Naive thymus-derived CD4-positive, alpha-beta T cell (primary cell): ENCODE measurements at regions of chr6 and their contacts with region 1.

Region 1: GRCh38 chr6:33248925-33249731 is 22.5 kb downstream of the VPS52 start:
- DNase-seq: peak; percentile 79 to 97 (median 94)
- ATAC-seq: peak; percentile 91
- H3K4me3 ChIP-seq: peak overlapping the region; percentile 81
- H3K4me3 Mint-ChIP-seq: peak overlapping the region; percentile 81 to 94 (median 90)
- H3K27ac ChIP-seq: peak overlapping the region; percentile 96
- H3K27ac Mint-ChIP-seq: peak overlapping the region; percentile 82 to 98 (median 94)
- H3K4me1 ChIP-seq: peaks cover 11 to 15% of the 10 kb centered on the region in 2 donors
- H3K4me1 Mint-ChIP-seq: peaks cover 26 to 43% (median 35%) of the 10 kb centered on the region in 7 donors
- H3K27me3 ChIP-seq: no peaks in the 10 kb centered on the region
- H3K27me3 Mint-ChIP-seq: peaks cover 0 to 4% (median 0%) of the 10 kb centered on the region in 5 donors

Region 2: GRCh38 chr6:32058511-32058963 is 1190.6 kb before region 1 on chr6:
- CTCF ChIA-PET with region 1: no interaction called
- POLR2A ChIA-PET with region 1: no interaction called
- intact Hi-C with region 1: no loop called
- DNase-seq: no peak
- ATAC-seq: no peak
- H3K4me3 ChIP-seq: no peak overlapping the region
- H3K4me3 Mint-ChIP-seq: no peak overlapping the region
- H3K27ac ChIP-seq: no peak overlapping the region
- H3K27ac Mint-ChIP-seq: no peak overlapping the region
- H3K4me1 ChIP-seq: no peaks in the 10 kb centered on the region
- H3K4me1 Mint-ChIP-seq: no peaks in the 10 kb centered on the region
- H3K27me3 ChIP-seq: no peaks in the 10 kb centered on the region
- H3K27me3 Mint-ChIP-seq: peaks cover 0 to 4% (median 0%) of the 10 kb centered on the region in 5 donors

Region 3: DNA sequence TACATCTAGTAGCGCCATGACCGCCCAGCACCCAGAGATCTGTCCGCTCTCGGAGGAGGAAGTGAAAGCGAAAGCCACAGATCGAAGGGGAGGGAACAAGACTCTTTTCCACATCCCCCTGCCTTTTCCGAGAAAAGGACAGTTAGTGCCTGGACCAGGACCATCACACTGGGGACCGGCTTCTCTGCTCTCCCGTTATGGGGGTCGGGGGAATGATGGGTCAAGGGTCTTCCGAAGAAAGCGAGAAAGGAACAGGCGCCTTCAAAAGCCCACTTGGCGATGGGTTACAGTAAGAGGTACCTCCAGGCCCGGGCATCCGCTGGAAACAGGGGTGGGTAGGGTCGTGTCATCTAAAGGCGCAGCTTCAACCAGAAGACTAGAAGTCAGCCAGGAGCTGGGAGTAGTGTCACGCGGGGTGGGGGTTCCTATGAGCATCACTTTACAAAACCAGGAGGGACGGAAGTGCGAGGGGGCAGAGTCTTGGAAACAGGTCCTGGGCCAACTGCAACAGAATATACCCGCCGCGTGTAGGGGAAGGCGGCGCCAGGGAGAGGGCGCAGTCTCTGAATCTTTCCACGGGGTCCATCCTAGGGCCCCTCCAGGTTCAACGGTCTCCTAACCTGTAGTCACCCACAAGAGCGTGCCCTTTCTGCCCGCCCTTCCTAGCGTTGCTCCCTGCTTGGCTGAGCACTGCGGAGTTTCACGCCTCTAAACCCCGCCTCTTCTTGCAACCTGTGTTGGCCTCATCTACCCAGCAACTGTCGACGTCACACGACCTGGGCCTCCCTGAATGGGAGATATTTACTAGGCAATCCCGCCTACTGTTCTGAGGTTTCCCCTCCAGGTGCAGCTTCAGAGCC is 404.9 kb before region 1 on chr6 and contains the start of gene PSMB8:
- CTCF ChIA-PET with region 1: no interaction called
- POLR2A ChIA-PET with region 1: no interaction called
- intact Hi-C with region 1: loop called (anchors 2 kb)
- DNase-seq: peak; percentile 92 to 99 (median 97)
- ATAC-seq: peak; percentile 90
- H3K4me3 ChIP-seq: peak within 1 kb of the TSS; percentile 97
- H3K4me3 Mint-ChIP-seq: peak within 1 kb of the TSS; percentile 92 to 99 (median 98)
- H3K27ac ChIP-seq: peak within 1 kb of the TSS; percentile 97
- H3K27ac Mint-ChIP-seq: peak within 1 kb of the TSS; percentile 99 to 100 (median 100)
- H3K4me1 ChIP-seq: peaks cover 71 to 72% of the 10 kb centered on the region in 2 donors
- H3K4me1 Mint-ChIP-seq: peaks cover 66 to 83% (median 79%) of the 10 kb centered on the region in 7 donors
- H3K27me3 ChIP-seq: no peaks in the 10 kb centered on the region
- H3K27me3 Mint-ChIP-seq: no peaks in the 10 kb centered on the region
- total RNA-seq, gene PSMB8: 111 to 419 (median 115) TPM

Region 4: DNA sequence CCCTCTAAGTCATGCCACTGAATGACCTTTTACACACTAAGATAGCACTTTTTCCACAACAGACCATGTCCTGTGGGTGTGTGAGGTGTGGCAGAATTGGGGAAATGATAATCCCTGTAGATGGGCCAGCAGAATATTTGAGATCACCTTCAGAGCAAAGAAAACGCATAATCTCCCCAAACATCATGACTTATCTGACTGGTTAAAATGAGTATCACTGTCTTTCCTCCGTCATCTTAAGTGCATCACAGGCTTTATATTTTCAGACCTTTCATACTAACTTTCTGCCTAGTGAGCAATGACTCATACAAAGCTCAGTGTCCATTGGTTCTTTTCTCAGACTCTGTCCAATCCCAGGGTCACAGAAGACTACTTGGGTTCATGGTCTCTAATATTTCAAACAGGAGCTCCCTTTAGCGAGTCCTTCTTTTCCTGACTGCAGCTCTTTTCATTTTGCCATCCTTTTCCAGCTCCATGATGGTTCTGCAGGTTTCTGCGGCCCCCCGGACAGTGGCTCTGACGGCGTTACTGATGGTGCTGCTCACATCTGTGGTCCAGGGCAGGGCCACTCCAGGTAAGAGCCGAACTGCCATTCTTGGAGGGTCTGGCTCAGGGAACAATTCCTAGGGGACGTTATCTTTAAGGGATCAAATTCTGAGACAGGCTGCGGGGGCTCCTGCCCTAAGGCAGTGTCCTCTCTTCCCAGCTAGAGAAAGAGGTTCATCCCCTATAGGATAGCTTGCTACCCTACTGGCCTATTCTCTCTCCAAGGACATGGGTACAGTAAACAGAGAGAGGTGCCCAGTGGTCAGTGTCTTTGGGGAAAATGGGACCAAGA is 173.3 kb before region 1 on chr6 and contains the start of gene HLA-DPB1:
- CTCF ChIA-PET with region 1: no interaction called
- POLR2A ChIA-PET with region 1: interaction called, 3 read pairs
- intact Hi-C with region 1: loop called in 1 of 2 experiments (anchors 5 kb)
- DNase-seq: peak in 7 of 9 donors; percentile 53 to 83 (median 67)
- ATAC-seq: peak; percentile 94
- H3K4me3 ChIP-seq: peak within 1 kb of the TSS; percentile 74
- H3K4me3 Mint-ChIP-seq: peak within 1 kb of the TSS; percentile 60 to 91 (median 84)
- H3K27ac ChIP-seq: peak within 1 kb of the TSS; percentile 76
- H3K27ac Mint-ChIP-seq: peak within 1 kb of the TSS; percentile 32 to 93 (median 76)
- H3K4me1 ChIP-seq: peaks cover 5 to 44% of the 10 kb centered on the region in 2 donors
- H3K4me1 Mint-ChIP-seq: peaks cover 34 to 71% (median 54%) of the 10 kb centered on the region in 7 donors
- H3K27me3 ChIP-seq: no peaks in the 10 kb centered on the region
- H3K27me3 Mint-ChIP-seq: peaks cover 0 to 11% (median 2%) of the 10 kb centered on the region in 5 donors
- total RNA-seq, gene HLA-DPB1: 13.7 to 308 (median 43.3) TPM

Region 5: GRCh38 chr6:33161354-33162331 is 87.5 kb before region 1 on chr6:
- CTCF ChIA-PET with region 1: interaction called, 73 read pairs
- POLR2A ChIA-PET with region 1: interaction called, 28 read pairs
- intact Hi-C with region 1: loop called (anchors 1 kb)
- DNase-seq: peak; percentile 64 to 89 (median 79)
- ATAC-seq: peak; percentile 97
- H3K4me3 ChIP-seq: peak overlapping the region; percentile 51
- H3K4me3 Mint-ChIP-seq: peak overlapping the region; percentile 76 to 90 (median 85)
- H3K27ac ChIP-seq: no peak overlapping the region
- H3K27ac Mint-ChIP-seq: peak overlapping the region in 6 of 9 donors; percentile 26 to 82 (median 58)
- H3K4me1 ChIP-seq: no peaks in the 10 kb centered on the region
- H3K4me1 Mint-ChIP-seq: peaks cover 8 to 16% (median 10%) of the 10 kb centered on the region in 7 donors
- H3K27me3 ChIP-seq: no peaks in the 10 kb centered on the region
- H3K27me3 Mint-ChIP-seq: peaks cover 0 to 5% (median 0%) of the 10 kb centered on the region in 5 donors

Region 6: DNA sequence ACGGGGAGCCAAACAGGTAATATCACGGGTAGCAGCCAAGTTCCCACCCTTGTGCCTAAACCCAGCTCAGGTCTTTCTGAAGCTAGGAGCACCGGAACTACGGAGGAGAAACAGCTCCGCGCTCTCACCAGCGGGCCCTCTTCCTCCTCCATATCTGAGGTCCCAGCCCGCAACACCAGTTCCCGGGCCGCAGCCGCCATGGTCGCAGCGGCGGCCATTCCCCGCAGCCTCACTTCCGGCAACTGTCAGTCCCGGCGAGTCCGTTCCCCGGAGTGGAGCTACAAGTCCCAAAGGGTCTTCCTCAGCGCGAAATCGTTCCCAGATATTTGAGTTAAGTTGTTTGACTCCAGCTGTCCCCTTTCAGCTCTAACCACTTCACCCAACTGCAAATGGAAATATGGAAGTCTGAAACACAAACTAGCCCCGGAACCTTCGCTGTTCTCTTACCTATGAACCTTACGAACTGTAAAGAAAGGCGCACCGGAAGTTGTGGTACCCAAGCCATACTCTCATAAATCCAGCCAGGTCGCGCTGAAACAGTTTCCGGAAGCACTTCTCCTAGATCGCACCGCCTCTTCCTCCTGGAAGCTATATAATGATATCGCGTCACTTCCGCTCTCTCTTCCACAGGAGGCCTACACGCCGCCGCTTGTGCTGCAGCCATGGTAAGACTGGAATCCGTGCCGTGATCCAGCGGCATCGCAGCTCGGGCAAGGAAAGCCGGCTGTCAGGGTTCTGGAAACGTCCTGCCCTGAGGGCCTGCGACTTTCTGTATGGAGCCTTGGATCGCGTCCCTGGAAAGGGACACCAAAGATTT is 22.5 kb after region 1 on chr6 and contains the starts of genes RPS18 and VPS52:
- CTCF ChIA-PET with region 1: interaction called, 24 read pairs
- POLR2A ChIA-PET with region 1: interaction called, 101 read pairs
- intact Hi-C with region 1: loop called (anchors 1 kb)
- DNase-seq: peak; percentile 84 to 97 (median 93)
- ATAC-seq: peak; percentile 91
- H3K4me3 ChIP-seq: peak within 1 kb of the TSS; percentile 93
- H3K4me3 Mint-ChIP-seq: peak within 1 kb of the TSS; percentile 87 to 100 (median 98)
- H3K27ac ChIP-seq: peak within 1 kb of the TSS; percentile 91
- H3K27ac Mint-ChIP-seq: peak within 1 kb of the TSS; percentile 95 to 100 (median 99)
- H3K4me1 ChIP-seq: peaks cover 41 to 44% of the 10 kb centered on the region in 2 donors
- H3K4me1 Mint-ChIP-seq: peaks cover 34 to 81% (median 66%) of the 10 kb centered on the region in 7 donors
- H3K27me3 ChIP-seq: no peaks in the 10 kb centered on the region
- H3K27me3 Mint-ChIP-seq: peaks cover 0 to 3% (median 0%) of the 10 kb centered on the region in 5 donors
- total RNA-seq, gene RPS18: 2,454 to 4,896 (median 3,431) TPM
- total RNA-seq, gene VPS52: 74.3 to 110 (median 90.5) TPM

Region 7: GRCh38 chr6:33299237-33299944 is 50.3 kb after region 1 on chr6:
- CTCF ChIA-PET with region 1: interaction called, 6 read pairs
- POLR2A ChIA-PET with region 1: interaction called, 11 read pairs
- intact Hi-C with region 1: loop called (anchors 1 kb)
- DNase-seq: peak; percentile 89 to 96 (median 93)
- ATAC-seq: peak; percentile 88
- H3K4me3 ChIP-seq: peak overlapping the region; percentile 78
- H3K4me3 Mint-ChIP-seq: peak overlapping the region; percentile 95 to 100 (median 99)
- H3K27ac ChIP-seq: peak overlapping the region; percentile 92
- H3K27ac Mint-ChIP-seq: peak overlapping the region; percentile 95 to 100 (median 99)
- H3K4me1 ChIP-seq: peaks cover 5 to 10% of the 10 kb centered on the region in 2 donors
- H3K4me1 Mint-ChIP-seq: peaks cover 25 to 48% (median 38%) of the 10 kb centered on the region in 7 donors
- H3K27me3 ChIP-seq: no peaks in the 10 kb centered on the region
- H3K27me3 Mint-ChIP-seq: peaks cover 0 to 3% (median 0%) of the 10 kb centered on the region in 5 donors

Region 8: DNA sequence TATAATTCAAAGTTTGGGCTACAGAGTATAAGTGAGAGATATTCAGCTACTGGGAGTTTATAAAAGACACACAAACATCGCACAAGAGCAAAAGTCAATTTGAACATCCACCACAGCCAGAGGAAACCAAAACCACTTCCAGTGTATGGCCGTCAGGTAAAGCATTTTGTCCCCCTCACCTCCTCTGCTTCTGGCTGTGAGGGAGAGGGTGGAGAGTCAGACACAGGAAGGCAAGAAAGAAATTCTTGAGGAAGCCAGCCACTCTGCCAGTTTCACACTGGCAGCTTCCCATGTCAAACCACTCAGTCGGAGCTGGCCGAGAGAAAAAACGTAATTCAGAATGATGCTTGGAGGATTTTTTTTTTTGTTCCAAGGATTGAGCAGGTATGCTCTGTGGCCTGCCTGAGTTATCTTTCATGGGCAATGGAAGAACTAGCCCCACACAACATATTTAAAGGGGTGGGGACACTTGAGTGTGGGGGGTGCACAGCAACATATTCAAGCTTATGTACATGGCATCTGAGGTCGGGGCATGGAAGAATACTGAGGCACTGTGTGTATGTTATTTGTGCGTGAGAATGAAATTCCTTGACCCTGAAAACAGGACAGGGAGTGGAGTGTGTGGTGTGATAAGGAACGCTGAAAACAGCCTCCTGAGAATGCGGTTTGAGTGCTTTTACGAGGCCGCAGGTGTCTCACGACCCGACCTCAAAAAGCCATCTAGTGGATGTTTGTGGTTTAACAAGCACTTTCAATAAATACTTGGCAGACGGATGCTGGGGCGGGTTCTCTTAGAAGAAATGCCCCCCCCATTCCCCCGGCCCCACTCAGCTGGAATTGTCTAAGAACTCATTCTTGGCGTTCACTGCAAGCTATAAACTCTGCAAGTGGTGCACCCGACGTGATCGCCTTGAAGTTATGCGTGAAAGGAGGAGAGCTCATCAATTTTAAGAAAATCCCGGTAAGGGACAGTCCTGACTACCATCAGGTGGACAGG is 95.9 kb after region 1 on chr6:
- CTCF ChIA-PET with region 1: no interaction called
- POLR2A ChIA-PET with region 1: interaction called, 16 read pairs
- intact Hi-C with region 1: loop called in 1 of 2 experiments (anchors 1 kb)
- DNase-seq: peak; percentile 28 to 87 (median 82)
- ATAC-seq: peak; percentile 60
- H3K4me3 ChIP-seq: peak overlapping the region; percentile 64
- H3K4me3 Mint-ChIP-seq: peak overlapping the region; percentile 68 to 89 (median 86)
- H3K27ac ChIP-seq: peak overlapping the region; percentile 60
- H3K27ac Mint-ChIP-seq: peak overlapping the region; percentile 88 to 99 (median 96)
- H3K4me1 ChIP-seq: peaks cover 23 to 33% of the 10 kb centered on the region in 2 donors
- H3K4me1 Mint-ChIP-seq: peaks cover 22 to 54% (median 41%) of the 10 kb centered on the region in 7 donors
- H3K27me3 ChIP-seq: no peaks in the 10 kb centered on the region
- H3K27me3 Mint-ChIP-seq: peaks cover 0 to 7% (median 0%) of the 10 kb centered on the region in 5 donors